ENCODE measurements at regions of chrX and their contacts with region 1.

Region 1: GRCh38 chrX:16212436-16212835 is 45.2 kb downstream of the MAGEB17 start:
- DNase-seq: peak; percentile 35
- H3K4me3 ChIP-seq: no peak overlapping the region
- H3K27ac ChIP-seq: no peak overlapping the region
- H3K4me1 ChIP-seq: no peaks in the 10 kb centered on the region
- H3K27me3 ChIP-seq: no peaks in the 10 kb centered on the region
- CTCF ChIP-seq: peak; percentile 28 to 37
- POLR2A ChIP-seq: no peak

Region 2: DNA sequence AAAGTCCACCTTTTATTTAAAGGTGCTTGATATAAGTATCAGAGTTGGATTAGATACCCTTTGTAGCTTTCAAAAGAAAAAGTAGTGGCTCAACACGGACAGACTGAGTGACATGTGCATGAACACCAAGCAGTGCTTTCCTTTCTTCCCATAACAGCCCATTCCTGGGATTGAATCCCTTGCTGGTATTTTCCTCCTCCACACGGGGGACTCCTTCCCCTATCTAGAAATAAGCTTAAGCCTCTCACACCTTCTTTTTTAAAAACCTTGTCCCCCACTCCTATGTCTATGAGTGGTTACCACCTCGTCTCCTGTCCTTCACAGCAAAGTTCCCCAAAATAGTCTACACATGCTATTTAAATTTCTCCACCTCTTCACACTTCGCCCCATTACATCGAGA is 362.9 kb before region 1 on chrX:
- CTCF ChIA-PET with region 1: interaction called, 19 read pairs
- POLR2A ChIA-PET with region 1: no interaction called
- dilution Hi-C with region 1: no loop called
- intact Hi-C with region 1: loop called (anchors 10 kb)
- DNase-seq: peak; percentile 29
- H3K4me3 ChIP-seq: no peak overlapping the region
- H3K27ac ChIP-seq: no peak overlapping the region
- H3K4me1 ChIP-seq: peaks cover 5% of the 10 kb centered on the region
- H3K27me3 ChIP-seq: no peaks in the 10 kb centered on the region
- CTCF ChIP-seq: peak in 1 of 2 donors; percentile 28
- POLR2A ChIP-seq: no peak

Region 3: GRCh38 chrX:15930585-15930984 is 281.9 kb before region 1 on chrX:
- CTCF ChIA-PET with region 1: interaction called, 15 read pairs
- POLR2A ChIA-PET with region 1: no interaction called
- dilution Hi-C with region 1: no loop called
- intact Hi-C with region 1: loop called (anchors 5 kb)
- DNase-seq: peak; percentile 36
- H3K4me3 ChIP-seq: no peak overlapping the region
- H3K27ac ChIP-seq: no peak overlapping the region
- H3K4me1 ChIP-seq: no peaks in the 10 kb centered on the region
- H3K27me3 ChIP-seq: peaks cover 0 to 3% of the 10 kb centered on the region in 2 experiments
- CTCF ChIP-seq: peak in 1 of 2 donors; percentile 4
- POLR2A ChIP-seq: no peak